Caco-2 (cell line): ENCODE measurements at regions of chr5 and their contacts with region 1.

Region 1: GRCh38 chr5:139341650-139342422 is at the start of gene PAIP2:
- DNase-seq: peak; percentile 98
- H3K4me3 ChIP-seq: peak within 1 kb of the TSS; percentile 92
- H3K4me3 Mint-ChIP-seq: peak within 1 kb of the TSS; percentile 96
- H3K27ac Mint-ChIP-seq: peak within 1 kb of the TSS; percentile 98
- H3K4me1 ChIP-seq: peaks cover 6% of the 10 kb centered on the region; the same call in 1 of the 2 replicates
- H3K4me1 Mint-ChIP-seq: peaks cover 13% of the 10 kb centered on the region
- H3K27me3 ChIP-seq: no peaks in the 10 kb centered on the region
- H3K27me3 Mint-ChIP-seq: no peaks in the 10 kb centered on the region
- CTCF ChIP-seq: peak; percentile 66 to 91
- total RNA-seq, gene PAIP2: 73.6 and 83.6 TPM in 2 replicates

Region 2: DNA sequence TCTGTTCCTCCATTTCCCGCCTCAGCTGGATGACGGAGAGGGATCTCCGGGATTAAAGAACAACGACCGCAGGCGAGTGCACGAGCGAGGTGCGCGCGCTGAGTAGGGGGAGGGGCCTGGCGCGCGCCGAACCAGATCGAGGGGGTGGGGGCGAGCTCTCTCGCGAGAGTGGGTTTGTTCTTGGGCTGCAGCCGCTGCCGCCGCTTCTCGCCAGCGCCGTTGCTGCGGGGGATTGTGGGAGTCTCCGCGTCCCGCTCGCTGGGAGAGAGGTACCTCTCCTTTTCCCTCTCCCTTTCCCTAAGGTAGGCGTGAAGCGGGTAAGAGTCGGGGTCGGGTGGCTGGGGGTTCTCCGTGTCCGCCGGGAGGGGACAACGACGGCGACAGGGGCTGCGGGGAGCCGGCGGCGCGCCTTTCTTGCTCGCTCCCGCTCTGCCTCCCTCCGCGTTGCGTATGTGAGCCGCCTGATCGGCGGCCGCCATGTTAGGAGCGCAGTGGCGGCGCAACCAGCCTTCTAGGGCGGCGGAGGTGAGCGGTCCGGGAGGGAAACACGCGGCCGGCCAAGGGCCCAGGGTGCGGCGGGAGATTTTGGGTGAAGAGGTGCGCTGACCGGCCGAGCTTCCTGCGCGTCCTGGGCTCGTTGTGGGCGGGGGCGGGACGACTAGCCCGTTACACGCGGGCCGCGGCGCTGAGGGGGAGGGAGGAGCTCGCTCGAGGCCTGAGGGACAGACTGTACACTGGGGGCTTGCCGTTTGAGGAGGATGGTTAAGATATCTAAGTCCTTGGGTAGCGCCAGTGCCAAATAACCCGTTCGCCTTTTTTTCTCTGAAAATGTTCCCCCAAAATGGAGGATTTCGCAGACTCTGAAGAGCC is 48.1 kb before region 1 on chr5 and contains the start of gene MATR3:
- CTCF ChIA-PET with region 1: no interaction called
- POLR2A ChIA-PET with region 1: interaction called, 38 read pairs
- intact Hi-C with region 1: loop called (anchors 1 kb)
- DNase-seq: peak; percentile 96
- H3K4me3 ChIP-seq: peak within 1 kb of the TSS; percentile 76
- H3K4me3 Mint-ChIP-seq: peak within 1 kb of the TSS; percentile 96
- H3K27ac Mint-ChIP-seq: peak within 1 kb of the TSS; percentile 99
- H3K4me1 ChIP-seq: peaks cover 12% of the 10 kb centered on the region; the same call in 1 of the 2 replicates
- H3K4me1 Mint-ChIP-seq: peaks cover 21% of the 10 kb centered on the region
- H3K27me3 ChIP-seq: no peaks in the 10 kb centered on the region
- H3K27me3 Mint-ChIP-seq: no peaks in the 10 kb centered on the region
- CTCF ChIP-seq: no peak
- total RNA-seq, gene MATR3: 194 and 200 TPM in 2 replicates

Region 3: GRCh38 chr5:139361835-139362429 is 20.1 kb after region 1 on chr5:
- CTCF ChIA-PET with region 1: interaction called, 3 read pairs
- POLR2A ChIA-PET with region 1: no interaction called
- intact Hi-C with region 1: loop called (anchors 2 kb)
- DNase-seq: no peak
- H3K4me3 ChIP-seq: no peak overlapping the region
- H3K4me3 Mint-ChIP-seq: no peak overlapping the region
- H3K27ac Mint-ChIP-seq: no peak overlapping the region
- H3K4me1 ChIP-seq: no peaks in the 10 kb centered on the region
- H3K4me1 Mint-ChIP-seq: no peaks in the 10 kb centered on the region
- H3K27me3 ChIP-seq: no peaks in the 10 kb centered on the region
- H3K27me3 Mint-ChIP-seq: no peaks in the 10 kb centered on the region
- CTCF ChIP-seq: no peak

Region 4: GRCh38 chr5:139392678-139393496 is 51.1 kb after region 1 on chr5:
- CTCF ChIA-PET with region 1: interaction called, 6 read pairs
- POLR2A ChIA-PET with region 1: interaction called, 4 read pairs
- intact Hi-C with region 1: loop called (anchors 1 kb)
- DNase-seq: peak; percentile 85 to 89
- H3K4me3 ChIP-seq: peak overlapping the region; percentile 86
- H3K4me3 Mint-ChIP-seq: peak overlapping the region; percentile 82
- H3K27ac Mint-ChIP-seq: peak overlapping the region; percentile 79
- H3K4me1 ChIP-seq: peaks cover 22% of the 10 kb centered on the region
- H3K4me1 Mint-ChIP-seq: peaks cover 9% of the 10 kb centered on the region
- H3K27me3 ChIP-seq: no peaks in the 10 kb centered on the region
- H3K27me3 Mint-ChIP-seq: no peaks in the 10 kb centered on the region
- CTCF ChIP-seq: peak; percentile 85 to 94

Region 5: DNA sequence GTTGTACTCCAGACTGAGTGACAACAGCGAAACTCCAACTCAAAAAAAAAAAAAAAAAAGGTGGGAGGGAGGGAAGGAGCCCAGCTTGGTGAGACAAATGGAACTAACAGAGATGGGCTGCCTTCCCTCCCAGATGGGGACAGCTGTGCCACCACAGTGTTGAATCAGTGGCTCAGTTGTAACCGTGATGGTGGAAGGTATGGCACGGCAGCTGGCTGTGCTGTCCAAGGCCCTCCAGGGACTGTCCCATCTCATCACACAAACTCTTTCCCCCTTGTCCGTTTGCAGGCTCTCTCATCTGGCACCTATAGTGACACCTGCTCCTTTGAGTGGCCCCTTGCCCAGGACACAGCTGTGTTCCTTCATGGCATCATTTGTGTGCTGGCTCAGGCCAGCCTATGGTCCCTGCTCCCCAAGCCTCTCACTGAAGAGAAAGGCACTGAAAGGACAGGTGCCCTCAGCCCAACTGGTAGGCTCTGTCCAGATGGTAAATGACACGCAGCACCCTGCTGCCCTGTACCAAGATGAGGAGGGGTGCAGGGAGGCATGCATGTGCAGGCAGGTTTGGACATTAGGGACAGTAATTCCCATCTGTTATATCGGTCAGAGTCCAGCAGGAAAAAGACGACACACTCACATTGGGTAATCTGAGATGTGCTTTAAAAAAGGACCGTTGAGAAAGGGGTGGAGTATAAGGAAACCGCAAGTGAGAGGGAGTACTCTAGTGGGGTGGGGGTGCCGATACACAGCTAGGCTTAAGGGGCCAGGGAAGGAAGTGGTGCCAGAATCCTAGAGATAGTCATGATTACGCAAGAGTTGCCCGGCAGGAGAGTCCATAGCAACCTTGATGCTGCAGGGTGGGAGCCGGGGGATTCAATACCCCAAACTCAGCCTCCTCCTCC is 133.3 kb after region 1 on chr5:
- CTCF ChIA-PET with region 1: no interaction called
- POLR2A ChIA-PET with region 1: no interaction called
- intact Hi-C with region 1: no loop called
- DNase-seq: no peak
- H3K4me3 ChIP-seq: no peak overlapping the region
- H3K4me3 Mint-ChIP-seq: no peak overlapping the region
- H3K27ac Mint-ChIP-seq: no peak overlapping the region
- H3K4me1 ChIP-seq: peaks cover 12% of the 10 kb centered on the region; the same call in 1 of the 2 replicates
- H3K4me1 Mint-ChIP-seq: no peaks in the 10 kb centered on the region
- H3K27me3 ChIP-seq: no peaks in the 10 kb centered on the region
- H3K27me3 Mint-ChIP-seq: no peaks in the 10 kb centered on the region
- CTCF ChIP-seq: no peak